Endothelial cell of umbilical vein (primary cell): ENCODE measurements at regions of chr12 and their contacts with region 1.

Region 1: GRCh38 chr12:110826592-110827200 is 20.1 kb upstream of the CCDC63 start:
- DNase-seq: peak; percentile 74
- H3K4me3 ChIP-seq: no peak overlapping the region
- H3K27ac ChIP-seq: no peak overlapping the region
- H3K4me1 ChIP-seq: no peaks in the 10 kb centered on the region
- H3K27me3 ChIP-seq: no peaks in the 10 kb centered on the region
- CTCF ChIP-seq: peak; percentile 74 to 77
- POLR2A ChIP-seq: no peak

Region 2: GRCh38 chr12:110513842-110514241 is 312.9 kb before region 1 on chr12:
- CTCF ChIA-PET with region 1: no interaction called
- POLR2A ChIA-PET with region 1: no interaction called
- dilution Hi-C with region 1: no loop called
- intact Hi-C with region 1: loop called (anchors 2 kb)
- DNase-seq: no peak
- H3K4me3 ChIP-seq: no peak overlapping the region
- H3K27ac ChIP-seq: no peak overlapping the region
- H3K4me1 ChIP-seq: no peaks in the 10 kb centered on the region
- H3K27me3 ChIP-seq: no peaks in the 10 kb centered on the region
- CTCF ChIP-seq: no peak
- POLR2A ChIP-seq: no peak

Region 3: DNA sequence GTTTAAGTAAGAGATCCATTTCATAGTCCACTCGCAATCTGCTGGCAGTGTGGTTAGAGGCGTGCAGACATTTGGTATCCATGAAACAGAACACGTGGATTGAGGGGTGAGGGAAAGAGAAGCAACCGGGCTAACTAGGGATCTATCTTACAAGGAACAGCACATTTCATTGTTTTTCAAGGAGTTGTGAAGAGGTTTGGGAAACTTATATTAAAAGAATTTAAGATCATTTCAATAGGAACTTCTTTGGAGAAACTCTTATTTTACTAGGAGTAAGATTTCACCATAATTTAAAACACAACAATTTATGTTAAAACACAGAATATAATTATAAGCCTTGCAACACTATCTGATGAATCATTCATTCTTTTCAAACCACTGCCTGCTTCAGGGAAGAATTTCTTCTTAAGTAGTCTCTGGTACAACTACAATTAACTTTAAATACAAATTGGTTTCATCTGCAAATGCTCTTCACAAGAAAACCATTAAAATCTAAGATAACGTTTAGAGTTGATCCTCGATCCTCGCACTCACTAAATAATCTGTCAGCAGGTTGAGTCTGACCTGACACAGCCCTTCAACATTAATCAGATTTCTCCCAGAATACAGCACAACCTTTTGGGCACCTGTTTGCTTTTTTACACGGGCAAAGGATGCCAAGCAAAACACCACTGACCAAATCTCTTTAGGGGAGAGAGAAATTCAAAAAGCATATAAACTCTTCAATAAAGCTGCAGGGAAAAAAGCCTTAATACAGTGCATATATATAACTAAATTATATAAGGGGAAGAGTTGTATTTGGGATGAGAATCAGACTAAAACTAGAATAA is 270.9 kb before region 1 on chr12:
- CTCF ChIA-PET with region 1: no interaction called
- POLR2A ChIA-PET with region 1: no interaction called
- dilution Hi-C with region 1: no loop called
- intact Hi-C with region 1: loop called (anchors 1 kb)
- DNase-seq: no peak
- H3K4me3 ChIP-seq: no peak overlapping the region
- H3K27ac ChIP-seq: no peak overlapping the region
- H3K4me1 ChIP-seq: no peaks in the 10 kb centered on the region
- H3K27me3 ChIP-seq: no peaks in the 10 kb centered on the region
- CTCF ChIP-seq: no peak
- POLR2A ChIP-seq: no peak

Region 4: GRCh38 chr12:110689281-110690126 is 137.2 kb before region 1 on chr12:
- CTCF ChIA-PET with region 1: no interaction called
- POLR2A ChIA-PET with region 1: no interaction called
- dilution Hi-C with region 1: no loop called
- intact Hi-C with region 1: no loop called
- DNase-seq: peak; percentile 43
- H3K4me3 ChIP-seq: peak overlapping the region in 2 of 3 experiments; percentile 45 to 62
- H3K27ac ChIP-seq: no peak overlapping the region
- H3K4me1 ChIP-seq: peaks cover 10% of the 10 kb centered on the region
- H3K27me3 ChIP-seq: peaks cover 0 to 3% of the 10 kb centered on the region in 2 experiments
- CTCF ChIP-seq: no peak
- POLR2A ChIP-seq: no peak

Region 5: GRCh38 chr12:110704748-110705147 is 121.9 kb before region 1 on chr12:
- CTCF ChIA-PET with region 1: interaction called, 4 read pairs
- POLR2A ChIA-PET with region 1: no interaction called
- dilution Hi-C with region 1: no loop called
- intact Hi-C with region 1: loop called (anchors 2 kb)
- DNase-seq: no peak
- H3K4me3 ChIP-seq: no peak overlapping the region
- H3K27ac ChIP-seq: no peak overlapping the region
- H3K4me1 ChIP-seq: no peaks in the 10 kb centered on the region
- H3K27me3 ChIP-seq: no peaks in the 10 kb centered on the region
- CTCF ChIP-seq: no peak
- POLR2A ChIP-seq: no peak

Region 6: DNA sequence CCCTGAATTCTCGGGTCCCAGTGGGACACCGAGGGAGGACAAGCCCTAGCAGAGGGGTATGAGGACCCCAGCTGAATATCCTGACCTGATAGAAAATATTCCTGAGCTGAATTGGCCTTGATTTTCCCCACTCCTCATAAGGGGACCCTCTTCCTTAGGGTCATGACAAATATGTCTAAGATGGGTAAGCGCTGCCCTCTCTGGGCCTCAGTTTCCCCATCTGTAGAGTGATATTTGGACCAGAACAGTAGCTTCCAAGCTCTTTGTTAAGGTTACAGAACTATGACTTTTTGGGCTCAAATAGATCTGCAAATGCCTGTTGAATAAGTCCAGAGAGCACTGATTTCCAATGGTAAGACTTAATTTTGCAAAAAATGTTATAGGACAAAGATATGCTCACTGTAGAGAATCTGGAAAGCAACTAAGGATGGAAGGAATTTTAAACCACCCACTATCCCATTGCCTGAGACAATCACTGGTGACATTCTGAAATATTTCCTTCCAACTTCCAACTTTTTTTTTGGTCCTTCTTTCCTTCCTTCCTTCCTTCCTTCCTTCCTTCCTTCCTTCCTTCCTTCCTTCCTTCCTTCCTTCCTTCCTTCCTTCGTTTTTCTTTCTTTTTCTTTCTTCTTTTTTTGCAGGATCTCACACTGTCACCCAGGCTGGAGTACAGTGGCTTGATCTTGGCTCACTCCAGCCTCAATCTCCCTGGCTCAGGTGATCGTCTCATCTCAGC is 61.7 kb after region 1 on chr12:
- CTCF ChIA-PET with region 1: interaction called, 10 read pairs
- POLR2A ChIA-PET with region 1: no interaction called
- dilution Hi-C with region 1: no loop called
- intact Hi-C with region 1: loop called (anchors 1 kb)
- DNase-seq: no peak
- H3K4me3 ChIP-seq: no peak overlapping the region
- H3K27ac ChIP-seq: no peak overlapping the region
- H3K4me1 ChIP-seq: peaks cover 5% of the 10 kb centered on the region
- H3K27me3 ChIP-seq: peaks cover 0 to 3% of the 10 kb centered on the region in 2 experiments
- CTCF ChIP-seq: no peak
- POLR2A ChIP-seq: no peak